Activated CD4-positive, alpha-beta memory T cell treated with anti-CD3 and anti-CD28 coated beads for 36 hours (primary cell): ENCODE measurements at regions of chr17 and their contacts with region 1.

Region 1: GRCh38 chr17:75261336-75262111 is at the starts of genes GGA3 and MRPS7:
- DNase-seq: peak; percentile 96
- H3K4me3 Mint-ChIP-seq: peak within 1 kb of the TSS; percentile 93
- H3K27ac Mint-ChIP-seq: peak within 1 kb of the TSS; percentile 96
- H3K4me1 Mint-ChIP-seq: peaks cover 49% of the 10 kb centered on the region
- H3K27me3 Mint-ChIP-seq: no peaks in the 10 kb centered on the region
- total RNA-seq, gene GGA3: 68.5 to 70.7 TPM
- total RNA-seq, gene MRPS7: 72.9 to 76.1 TPM

Region 2: DNA sequence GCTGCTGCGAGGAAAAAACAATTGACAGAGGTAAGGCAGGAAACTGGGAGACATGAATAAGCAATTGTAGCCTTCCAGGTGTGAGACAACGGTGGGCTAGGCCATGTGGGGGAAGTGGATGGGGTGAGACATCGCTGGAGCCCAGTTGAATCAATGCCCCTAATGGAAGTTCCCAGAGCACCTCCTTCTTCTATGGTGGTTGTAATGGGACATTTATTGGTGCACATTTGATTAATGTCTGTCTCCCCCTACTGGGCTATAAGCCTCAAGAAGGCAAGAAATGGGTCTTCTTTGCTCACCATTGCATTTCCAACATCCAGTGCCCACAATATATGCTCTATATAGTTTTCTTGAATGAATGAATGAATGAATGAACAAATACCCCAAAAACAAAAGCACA is 615.3 kb before region 1 on chr17:
- CTCF ChIA-PET with region 1: no interaction called
- POLR2A ChIA-PET with region 1: no interaction called
- intact Hi-C with region 1: no loop called
- DNase-seq: no peak
- H3K4me3 Mint-ChIP-seq: no peak overlapping the region
- H3K27ac Mint-ChIP-seq: no peak overlapping the region
- H3K4me1 Mint-ChIP-seq: no peaks in the 10 kb centered on the region
- H3K27me3 Mint-ChIP-seq: peaks cover 36% of the 10 kb centered on the region

Region 3: DNA sequence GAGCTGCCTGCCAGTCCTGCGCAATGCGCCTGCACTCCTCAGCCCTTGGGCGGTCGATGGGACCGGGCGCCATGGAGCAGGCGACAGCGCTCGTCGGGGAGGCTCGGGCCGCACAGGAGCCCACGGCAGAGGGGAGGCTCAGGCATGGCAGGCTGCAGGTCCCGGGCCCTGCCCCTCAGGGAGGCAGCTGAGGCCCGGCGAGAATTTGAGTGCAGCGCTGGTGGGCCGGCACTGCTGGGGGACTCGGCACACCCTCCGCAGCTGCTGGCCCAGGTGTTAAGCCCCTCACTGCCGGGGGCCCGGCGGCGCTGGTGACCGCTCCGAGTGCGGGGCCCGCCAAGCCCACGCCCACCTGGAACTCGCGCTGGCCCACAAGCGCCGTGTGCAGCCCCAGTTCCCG is 354.5 kb before region 1 on chr17:
- CTCF ChIA-PET with region 1: no interaction called
- POLR2A ChIA-PET with region 1: no interaction called
- intact Hi-C with region 1: no loop called
- DNase-seq: no peak
- H3K4me3 Mint-ChIP-seq: no peak overlapping the region
- H3K27ac Mint-ChIP-seq: no peak overlapping the region
- H3K4me1 Mint-ChIP-seq: peaks cover 3% of the 10 kb centered on the region
- H3K27me3 Mint-ChIP-seq: peaks cover 1% of the 10 kb centered on the region

Region 4: DNA sequence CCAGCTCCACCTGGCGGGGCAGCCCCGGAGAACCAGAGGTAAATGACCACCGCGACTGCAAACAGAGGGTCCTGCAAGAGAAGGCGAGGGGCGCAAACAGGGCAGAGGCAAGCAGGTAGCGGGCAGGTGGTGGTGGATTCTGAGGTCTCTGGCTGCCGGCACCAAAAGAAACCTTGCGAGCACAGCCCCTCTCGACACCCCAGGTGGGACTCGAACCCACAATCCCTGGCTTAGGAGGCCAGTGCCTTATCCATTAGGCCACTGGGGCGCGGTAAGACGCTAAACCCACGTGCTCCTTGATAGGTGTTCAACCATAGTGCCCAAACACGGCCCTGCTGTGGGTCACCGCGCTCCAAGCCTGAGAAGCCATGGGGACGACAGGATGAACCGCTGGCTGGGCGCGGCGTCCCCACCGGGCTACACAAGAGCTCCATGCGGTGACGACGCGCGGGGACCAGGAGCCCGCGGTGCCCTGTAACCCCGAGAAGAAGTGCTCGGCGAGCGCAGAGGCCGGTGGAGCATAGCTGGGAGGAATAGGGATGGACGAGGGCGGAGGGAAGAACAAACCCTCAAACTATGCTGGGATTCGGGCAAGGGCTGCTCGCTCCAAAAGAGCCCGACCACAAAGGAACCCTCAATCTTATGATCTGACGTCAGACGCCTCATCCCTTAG is 227.2 kb before region 1 on chr17:
- CTCF ChIA-PET with region 1: no interaction called
- POLR2A ChIA-PET with region 1: no interaction called
- intact Hi-C with region 1: loop called (anchors 10 kb)
- DNase-seq: peak; percentile 95
- H3K4me3 Mint-ChIP-seq: peak overlapping the region; percentile 97
- H3K27ac Mint-ChIP-seq: peak overlapping the region; percentile 96
- H3K4me1 Mint-ChIP-seq: peaks cover 49% of the 10 kb centered on the region
- H3K27me3 Mint-ChIP-seq: peaks cover 4% of the 10 kb centered on the region

Region 5: DNA sequence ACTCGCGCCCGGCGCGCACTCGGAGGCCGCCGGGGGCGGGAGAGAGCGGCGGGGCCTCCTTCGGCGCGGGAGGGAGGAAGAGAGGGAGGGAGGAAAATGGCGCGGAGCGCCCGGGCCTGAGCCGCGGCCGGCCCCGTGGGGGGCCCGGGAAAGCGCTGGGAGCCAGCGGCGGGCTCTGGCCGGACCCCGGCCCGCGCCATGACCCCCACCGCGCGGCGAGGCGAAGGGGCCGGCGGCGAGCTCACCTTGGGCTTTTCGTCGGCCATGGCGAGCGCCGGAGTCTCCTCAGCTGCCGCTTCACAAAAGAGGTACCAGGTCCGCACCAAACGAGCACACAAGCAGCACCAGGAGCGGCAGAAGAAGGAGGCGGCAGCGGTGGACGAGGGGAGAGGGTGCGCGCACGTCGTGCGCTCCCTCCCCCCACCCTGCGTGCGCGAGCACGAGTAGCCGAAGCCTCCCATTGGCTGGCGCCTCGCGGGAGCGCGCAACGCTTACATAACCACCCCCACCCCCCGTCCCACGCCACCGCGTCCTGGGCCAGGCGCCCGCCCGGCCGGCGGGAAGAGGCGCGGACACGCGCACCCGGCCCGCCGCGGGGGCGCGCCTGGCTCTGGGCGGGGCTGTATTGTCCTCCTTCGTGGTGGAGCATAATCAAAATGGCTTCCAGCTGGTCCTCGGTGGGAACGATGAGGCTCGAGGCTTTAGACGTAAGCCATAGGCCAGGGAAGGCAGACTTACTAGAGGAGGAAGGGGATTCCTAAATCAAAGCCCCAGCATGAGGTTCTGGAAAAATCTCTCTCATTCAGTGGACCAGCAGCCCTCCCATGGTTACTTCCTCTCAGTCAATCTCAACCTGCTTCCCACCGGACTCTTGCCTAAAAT is 78.7 kb before region 1 on chr17 and contains the start of gene SUMO2:
- CTCF ChIA-PET with region 1: no interaction called
- POLR2A ChIA-PET with region 1: interaction called, 6 read pairs
- intact Hi-C with region 1: loop called (anchors 5 kb)
- DNase-seq: peak; percentile 97
- H3K4me3 Mint-ChIP-seq: peak within 1 kb of the TSS; percentile 91
- H3K27ac Mint-ChIP-seq: peak within 1 kb of the TSS; percentile 97
- H3K4me1 Mint-ChIP-seq: peaks cover 30% of the 10 kb centered on the region
- H3K27me3 Mint-ChIP-seq: no peaks in the 10 kb centered on the region
- total RNA-seq, gene SUMO2: 610 to 612 TPM

Region 6: GRCh38 chr17:75238684-75239191 is 22.8 kb before region 1 on chr17:
- CTCF ChIA-PET with region 1: interaction called, 49 read pairs
- POLR2A ChIA-PET with region 1: interaction called, 45 read pairs
- intact Hi-C with region 1: no loop called
- DNase-seq: peak; percentile 74
- H3K4me3 Mint-ChIP-seq: no peak overlapping the region
- H3K27ac Mint-ChIP-seq: peak overlapping the region; percentile 85
- H3K4me1 Mint-ChIP-seq: peaks cover 41% of the 10 kb centered on the region
- H3K27me3 Mint-ChIP-seq: no peaks in the 10 kb centered on the region

Region 7: DNA sequence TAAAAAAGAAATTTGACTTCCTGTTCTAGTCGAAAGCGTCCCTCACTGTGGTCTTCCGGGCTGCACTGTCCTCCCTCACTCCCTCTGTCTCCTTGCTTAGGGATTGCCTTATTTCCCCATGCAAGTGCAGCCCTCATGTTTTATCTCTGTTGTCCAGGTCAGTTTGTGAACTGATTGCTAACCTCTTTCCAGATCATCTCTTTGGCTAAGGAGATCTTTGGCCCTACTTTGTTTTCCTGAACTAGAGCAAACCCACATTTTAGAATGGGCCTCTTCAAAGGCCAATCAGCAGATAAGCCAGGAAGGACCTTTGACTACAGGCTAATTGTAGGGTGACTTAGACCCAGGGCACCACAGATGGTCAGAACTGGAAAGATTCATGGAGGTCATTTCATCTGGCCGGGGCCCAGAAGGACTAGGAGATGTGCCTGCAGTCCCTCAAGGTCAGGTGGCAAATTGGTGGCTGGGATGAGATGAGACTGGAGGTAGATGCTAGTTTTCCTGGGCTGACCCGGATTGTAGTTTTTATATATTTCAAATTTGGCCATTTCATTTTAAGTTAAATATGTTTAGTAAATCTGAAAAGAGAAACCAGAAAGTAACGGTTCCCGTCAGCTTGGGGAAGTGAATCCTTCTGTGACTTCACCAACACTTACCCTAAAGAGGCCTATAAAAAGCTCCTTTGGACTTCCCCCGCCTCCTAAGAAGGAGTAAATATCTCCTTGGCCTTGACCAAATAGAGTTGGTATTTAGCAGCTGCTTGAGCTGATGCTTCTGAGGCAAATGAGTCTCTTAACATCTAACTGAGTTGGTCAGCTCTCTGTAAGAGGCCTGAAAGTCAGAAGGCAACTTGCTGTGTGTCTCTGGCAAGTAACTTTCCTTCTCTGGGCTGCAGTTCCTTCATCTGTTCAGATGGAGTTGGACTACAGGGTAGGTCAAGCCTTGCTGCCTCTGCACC is 34.0 kb after region 1 on chr17:
- CTCF ChIA-PET with region 1: no interaction called
- POLR2A ChIA-PET with region 1: interaction called, 35 read pairs
- intact Hi-C with region 1: no loop called
- DNase-seq: peak; percentile 58
- H3K4me3 Mint-ChIP-seq: peak overlapping the region; percentile 37
- H3K27ac Mint-ChIP-seq: peak overlapping the region; percentile 99
- H3K4me1 Mint-ChIP-seq: peaks cover 35% of the 10 kb centered on the region
- H3K27me3 Mint-ChIP-seq: no peaks in the 10 kb centered on the region

Region 8: GRCh38 chr17:75456417-75457046 is 195.0 kb after region 1 on chr17 and contains the start of gene TMEM94:
- CTCF ChIA-PET with region 1: interaction called, 4 read pairs
- POLR2A ChIA-PET with region 1: interaction called, 11 read pairs
- intact Hi-C with region 1: no loop called
- DNase-seq: peak; percentile 95
- H3K4me3 Mint-ChIP-seq: peak within 1 kb of the TSS; percentile 88
- H3K27ac Mint-ChIP-seq: peak within 1 kb of the TSS; percentile 62
- H3K4me1 Mint-ChIP-seq: peaks cover 23% of the 10 kb centered on the region
- H3K27me3 Mint-ChIP-seq: no peaks in the 10 kb centered on the region
- total RNA-seq, gene TMEM94: 51.4 to 53.0 TPM